ENCODE measurements at regions of chr12 and their contacts with region 1.

Region 1: DNA sequence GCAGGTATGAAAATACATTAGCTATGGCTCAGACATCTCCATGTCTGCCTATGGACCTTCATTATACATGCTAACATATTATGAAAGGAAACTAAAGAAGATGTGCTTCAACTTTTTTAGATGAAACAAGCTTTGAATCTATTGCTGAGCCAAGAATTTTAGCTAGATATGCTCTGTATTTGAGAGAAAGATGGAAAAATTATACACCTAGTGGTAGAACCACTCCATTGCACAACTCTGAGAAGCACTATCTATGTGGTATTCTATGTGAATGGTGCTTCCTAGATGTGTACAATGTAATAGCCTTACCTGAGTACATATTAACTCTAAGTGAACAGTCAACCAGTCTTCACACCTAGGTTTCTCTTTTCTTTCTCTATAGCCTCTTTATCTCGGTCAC is 17.3 kb downstream of the EPYC start:
- DNase-seq: no peak
- H3K4me3 ChIP-seq: no peak overlapping the region
- H3K27ac ChIP-seq: no peak overlapping the region
- H3K4me1 ChIP-seq: no peaks in the 10 kb centered on the region
- H3K27me3 ChIP-seq: no peaks in the 10 kb centered on the region
- CTCF ChIP-seq: peak in 1 of 6 experiments; percentile 3
- POLR2A ChIP-seq: no peak

Region 2: DNA sequence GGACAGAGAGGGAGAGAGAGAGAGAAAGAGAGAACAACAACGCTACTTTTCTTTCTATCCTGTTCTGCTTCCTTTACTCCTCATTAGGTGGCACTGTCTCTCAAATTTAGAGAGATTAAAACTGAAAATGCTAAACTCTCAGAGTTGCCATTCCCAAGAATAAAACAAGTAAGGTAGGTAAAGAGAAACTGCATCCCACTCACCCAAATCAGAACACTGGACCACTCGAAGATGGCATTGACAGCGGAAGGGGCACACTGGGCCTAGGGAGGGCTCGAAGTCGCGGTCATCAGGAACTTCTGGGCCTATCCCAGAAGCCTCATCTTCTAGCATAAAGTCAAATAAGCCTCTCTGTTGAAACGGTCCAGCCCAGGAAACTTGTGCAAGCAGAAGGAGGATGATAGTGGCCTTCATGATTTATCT is 190.6 kb after region 1 on chr12:
- intact Hi-C with region 1: no loop called
- DNase-seq: peak in 1 of 2 donors; percentile 4
- H3K4me3 ChIP-seq: no peak overlapping the region
- H3K27ac ChIP-seq: peak overlapping the region in 2 of 3 donors; percentile 30 to 46
- H3K4me1 ChIP-seq: no peaks in the 10 kb centered on the region
- H3K27me3 ChIP-seq: no peaks in the 10 kb centered on the region
- CTCF ChIP-seq: peak in 5 of 6 experiments; percentile 12 to 88 (median 65)
- POLR2A ChIP-seq: no peak

Region 3: DNA sequence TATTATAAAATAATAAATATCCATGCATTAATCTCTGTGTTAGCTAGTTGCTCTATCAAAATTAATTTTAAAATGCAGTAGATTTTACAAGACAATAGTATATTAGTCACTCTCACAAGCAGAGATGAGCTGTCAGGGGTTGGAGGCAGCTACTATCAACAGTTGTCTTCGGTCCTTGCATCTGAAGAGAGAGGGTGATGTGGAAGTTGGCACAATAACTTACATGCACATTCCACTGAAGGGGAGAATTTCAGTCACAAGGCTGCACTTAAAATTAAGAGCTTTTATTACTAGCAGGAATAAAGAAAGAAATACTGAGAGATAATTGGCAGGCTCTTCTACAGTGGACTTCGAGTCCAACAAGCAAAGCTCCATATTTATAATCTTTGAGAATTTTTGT is 362.0 kb after region 1 on chr12:
- intact Hi-C with region 1: loop called (anchors 10 kb)
- DNase-seq: no peak
- H3K4me3 ChIP-seq: no peak overlapping the region
- H3K27ac ChIP-seq: no peak overlapping the region
- H3K4me1 ChIP-seq: peaks cover 0 to 8% of the 10 kb centered on the region in 2 donors
- H3K27me3 ChIP-seq: no peaks in the 10 kb centered on the region
- CTCF ChIP-seq: no peak
- POLR2A ChIP-seq: no peak